Testis (tissue), 5 donors: ENCODE measurements at regions of chr5 and their contacts with region 1.

Region 1: GRCh38 chr5:95846554-95847260 is 24.2 kb upstream of the GLRX start:
- DNase-seq: peak; percentile 81
- H3K4me3 ChIP-seq: no peak overlapping the region
- H3K27ac ChIP-seq: peak overlapping the region in 1 of 2 donors; percentile 7
- H3K4me1 ChIP-seq: peaks cover 14% of the 10 kb centered on the region
- H3K27me3 ChIP-seq: no peaks in the 10 kb centered on the region
- CTCF ChIP-seq: peak; percentile 89 to 96 (median 94)
- POLR2A ChIP-seq: no peak

Region 2: GRCh38 chr5:95646554-95647431 is 199.9 kb before region 1 on chr5 and contains the start of gene RFESD:
- intact Hi-C with region 1: loop called (anchors 10 kb)
- DNase-seq: peak; percentile 99
- H3K4me3 ChIP-seq: peak within 1 kb of the TSS; percentile 60 to 66
- H3K27ac ChIP-seq: peak within 1 kb of the TSS; percentile 95
- H3K4me1 ChIP-seq: peaks cover 12% of the 10 kb centered on the region
- H3K27me3 ChIP-seq: no peaks in the 10 kb centered on the region
- CTCF ChIP-seq: peak in 2 of 3 experiments; percentile 27 to 29
- POLR2A ChIP-seq: peak; percentile 67
- total RNA-seq, gene RFESD: 11.8 to 12.8 TPM

Region 3: GRCh38 chr5:95664204-95664786 is 182.4 kb before region 1 on chr5:
- intact Hi-C with region 1: loop called (anchors 5 kb)
- DNase-seq: peak; percentile 55
- H3K4me3 ChIP-seq: no peak overlapping the region
- H3K27ac ChIP-seq: peak overlapping the region; percentile 18 to 47
- H3K4me1 ChIP-seq: peaks cover 16% of the 10 kb centered on the region
- H3K27me3 ChIP-seq: no peaks in the 10 kb centered on the region
- CTCF ChIP-seq: peak; percentile 76 to 87 (median 77)
- POLR2A ChIP-seq: no peak

Region 4: DNA sequence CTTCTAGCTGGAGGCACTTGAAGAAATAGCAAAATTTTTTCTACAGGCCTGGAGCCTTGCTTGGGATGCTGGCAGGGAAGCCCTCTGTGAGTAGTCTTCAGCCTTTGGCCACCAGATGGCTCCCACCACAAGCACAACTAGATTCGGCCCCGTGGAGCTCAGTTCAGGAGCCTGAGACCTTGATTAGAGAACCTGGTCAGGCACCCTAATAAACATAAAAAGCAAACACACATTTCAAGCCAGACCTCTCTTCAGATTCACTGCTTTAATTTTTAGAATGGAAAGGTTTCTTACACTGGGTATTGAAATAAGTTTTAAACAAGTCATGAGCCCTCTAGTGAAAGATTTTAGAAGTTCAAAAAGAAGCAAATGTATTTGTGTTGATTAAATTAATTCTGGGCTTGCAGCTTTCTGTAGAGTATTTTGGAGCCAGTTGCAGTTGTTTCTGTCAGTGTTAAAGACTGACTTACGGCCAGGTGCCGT is 65.6 kb before region 1 on chr5:
- intact Hi-C with region 1: loop called (anchors 5 kb)
- DNase-seq: peak; percentile 91
- H3K4me3 ChIP-seq: no peak overlapping the region
- H3K27ac ChIP-seq: peak overlapping the region; percentile 52 to 81
- H3K4me1 ChIP-seq: peaks cover 29% of the 10 kb centered on the region
- H3K27me3 ChIP-seq: no peaks in the 10 kb centered on the region
- CTCF ChIP-seq: peak; percentile 66 to 83 (median 67)
- POLR2A ChIP-seq: no peak

Region 5: DNA sequence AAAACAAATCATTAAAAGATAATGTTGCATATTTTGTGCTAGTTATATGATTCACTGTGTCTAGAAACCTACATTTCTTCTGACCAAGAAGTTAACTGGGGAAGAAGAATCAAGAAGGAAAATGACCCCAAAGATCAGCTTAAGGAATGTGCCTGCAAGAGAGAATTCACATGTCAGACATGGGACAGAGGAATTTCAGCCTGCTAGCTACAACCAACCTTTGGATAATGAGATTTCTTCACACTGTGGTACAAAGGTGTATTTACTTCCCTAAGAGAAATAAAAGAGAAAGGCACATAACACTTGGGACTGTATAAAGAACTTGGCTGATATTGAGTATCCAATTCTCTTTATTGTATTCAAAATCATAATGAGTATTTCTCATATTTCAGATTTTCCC is 154.6 kb after region 1 on chr5:
- intact Hi-C with region 1: no loop called
- DNase-seq: no peak
- H3K4me3 ChIP-seq: no peak overlapping the region
- H3K27ac ChIP-seq: no peak overlapping the region
- H3K4me1 ChIP-seq: no peaks in the 10 kb centered on the region
- H3K27me3 ChIP-seq: no peaks in the 10 kb centered on the region
- CTCF ChIP-seq: no peak
- POLR2A ChIP-seq: no peak